Activated CD8-positive, alpha-beta memory T cell treated with anti-CD3 and anti-CD28 coated beads, Interleukin-2, amount 10 ng/mL, durations not matched to agents 7 days and 5 days (primary cell): ENCODE measurements at regions of chr12 and their contacts with region 1.

Region 1: DNA sequence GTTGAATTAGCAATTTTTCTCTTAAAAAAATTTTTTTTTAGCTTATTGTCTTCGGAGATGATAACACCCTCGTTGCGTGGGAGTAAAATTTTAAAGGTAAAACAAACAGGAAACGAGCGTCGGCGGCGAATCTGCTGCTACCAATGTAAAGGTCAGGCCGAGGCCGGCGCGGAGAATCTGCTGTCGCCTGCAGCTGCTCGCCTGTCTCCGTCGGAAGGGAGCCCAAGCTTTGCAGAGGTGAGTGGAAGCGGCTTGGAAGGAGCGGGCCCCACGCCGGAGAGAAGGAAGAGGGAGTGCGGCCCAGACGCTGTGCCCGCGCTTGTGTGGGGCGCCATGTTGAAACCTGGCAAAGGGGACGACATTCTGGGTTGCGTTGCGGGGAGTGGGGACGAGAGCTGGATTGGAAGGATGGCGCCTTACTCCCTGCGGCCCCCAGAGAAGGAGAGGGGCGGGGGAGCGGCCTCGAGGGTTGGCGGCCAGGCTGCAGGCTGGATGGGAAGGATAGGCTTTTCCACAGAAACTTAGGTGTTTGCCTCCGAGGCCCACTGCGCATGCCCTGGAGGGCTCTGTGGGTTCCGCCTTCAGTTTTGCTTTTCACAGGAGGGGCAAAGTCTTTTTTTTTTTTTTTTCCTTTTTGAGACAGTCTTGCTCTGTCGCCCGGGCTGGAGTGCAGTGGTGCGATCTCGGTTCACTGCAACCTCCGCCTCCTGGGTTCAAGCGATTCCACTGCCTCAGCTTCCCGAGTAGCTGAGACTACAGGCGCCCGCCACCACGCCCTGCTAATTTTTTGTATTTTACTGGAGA is at the start of gene SNRNP35:
- DNase-seq: peak; percentile 91
- ATAC-seq: peak; percentile 81
- H3K4me3 Mint-ChIP-seq: peak within 1 kb of the TSS; percentile 91
- H3K27ac Mint-ChIP-seq: peak within 1 kb of the TSS; percentile 99
- H3K4me1 Mint-ChIP-seq: peaks cover 23% of the 10 kb centered on the region
- H3K27me3 Mint-ChIP-seq: no peaks in the 10 kb centered on the region
- total RNA-seq, gene SNRNP35: 31.0 to 32.1 TPM

Region 2: GRCh38 chr12:123410041-123410412 is 48.2 kb before region 1 on chr12:
- CTCF ChIA-PET with region 1: no interaction called
- DNase-seq: no peak
- ATAC-seq: no peak
- H3K4me3 Mint-ChIP-seq: no peak overlapping the region
- H3K27ac Mint-ChIP-seq: peak overlapping the region; percentile 14
- H3K4me1 Mint-ChIP-seq: no peaks in the 10 kb centered on the region
- H3K27me3 Mint-ChIP-seq: no peaks in the 10 kb centered on the region

Region 3: GRCh38 chr12:123427036-123427769 is 31.0 kb before region 1 on chr12:
- CTCF ChIA-PET with region 1: interaction called, 10 read pairs
- DNase-seq: peak; percentile 74
- ATAC-seq: peak; percentile 68
- H3K4me3 Mint-ChIP-seq: peak overlapping the region; percentile 54
- H3K27ac Mint-ChIP-seq: peak overlapping the region; percentile 88
- H3K4me1 Mint-ChIP-seq: peaks cover 39% of the 10 kb centered on the region
- H3K27me3 Mint-ChIP-seq: no peaks in the 10 kb centered on the region

Region 4: GRCh38 chr12:123559468-123559867 is 101.3 kb after region 1 on chr12:
- CTCF ChIA-PET with region 1: no interaction called
- DNase-seq: no peak
- ATAC-seq: no peak
- H3K4me3 Mint-ChIP-seq: no peak overlapping the region
- H3K27ac Mint-ChIP-seq: no peak overlapping the region
- H3K4me1 Mint-ChIP-seq: peaks cover 3% of the 10 kb centered on the region
- H3K27me3 Mint-ChIP-seq: peaks cover 3% of the 10 kb centered on the region